Endothelial cell of umbilical vein (primary cell): ENCODE measurements at regions of chr1 and their contacts with region 1.

Region 1: DNA sequence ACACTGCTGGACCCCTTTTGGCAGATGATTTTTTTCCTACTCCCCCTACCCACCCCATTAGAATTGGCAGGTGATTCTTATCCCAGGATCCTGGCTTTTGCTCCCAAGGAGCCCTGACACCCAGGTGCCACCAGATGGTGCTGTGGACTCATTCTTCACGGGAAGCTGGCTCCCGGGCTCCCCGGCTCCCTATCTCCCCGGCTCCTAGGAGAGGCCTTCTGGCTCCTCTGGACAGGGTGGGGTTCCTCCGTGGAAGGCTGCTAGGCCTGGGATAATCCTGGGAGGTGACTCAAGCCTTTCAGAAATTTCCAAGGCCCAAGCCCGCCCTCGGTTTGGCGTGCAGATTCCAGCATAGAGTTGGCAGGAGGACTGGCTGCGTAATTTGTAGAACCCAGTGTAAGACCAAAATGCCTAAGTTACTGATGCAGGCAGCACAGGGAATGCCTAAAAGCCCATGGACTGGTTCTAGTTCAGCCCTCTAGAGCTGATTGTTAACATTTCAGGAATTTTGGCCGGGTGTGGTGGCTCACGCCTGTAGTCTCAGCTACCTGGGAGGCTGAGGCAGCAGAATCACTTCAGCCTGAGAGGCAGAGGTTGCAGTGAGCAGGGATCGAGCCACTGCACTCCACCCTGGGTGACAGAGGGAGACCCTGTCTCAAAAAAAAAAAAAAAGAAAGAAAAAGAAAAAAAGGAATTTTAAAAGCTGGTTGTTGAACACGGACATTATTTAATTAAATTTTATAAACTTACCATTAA is 6.8 kb upstream of the BSDC1 start:
- DNase-seq: peak; percentile 65
- H3K4me3 ChIP-seq: no peak overlapping the region
- H3K27ac ChIP-seq: no peak overlapping the region
- H3K4me1 ChIP-seq: no peaks in the 10 kb centered on the region
- H3K27me3 ChIP-seq: no peaks in the 10 kb centered on the region
- CTCF ChIP-seq: peak; percentile 88 to 90
- POLR2A ChIP-seq: no peak

Region 2: DNA sequence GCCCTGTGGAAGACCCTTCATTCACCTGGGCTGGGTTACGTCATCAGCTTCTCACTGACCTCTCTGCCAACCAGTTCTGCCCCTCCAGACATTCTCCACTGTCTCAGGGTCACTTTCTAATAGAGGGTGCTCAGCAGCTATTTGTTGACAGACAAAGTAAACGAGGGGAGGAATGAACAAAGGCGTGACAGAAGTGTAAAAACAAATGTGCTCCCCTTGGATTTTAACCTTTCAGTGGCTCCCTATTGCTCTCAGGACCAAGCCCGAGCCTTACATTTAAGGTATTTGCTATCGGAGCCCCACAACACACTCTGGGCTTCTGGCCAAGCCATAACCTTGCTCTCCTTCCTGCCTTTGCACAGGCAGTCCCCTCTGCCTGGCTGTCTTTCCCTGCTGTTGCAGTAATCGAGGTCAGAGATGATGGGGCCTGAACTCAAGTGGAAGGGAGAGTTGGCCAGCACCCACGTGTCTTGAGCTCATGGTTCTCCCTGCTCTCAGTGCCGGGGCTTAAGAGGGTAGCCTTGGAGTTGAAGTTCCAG is 55.7 kb before region 1 on chr1:
- CTCF ChIA-PET with region 1: interaction called, 10 read pairs
- POLR2A ChIA-PET with region 1: no interaction called
- dilution Hi-C with region 1: no loop called
- intact Hi-C with region 1: no loop called
- DNase-seq: peak; percentile 56
- H3K4me3 ChIP-seq: no peak overlapping the region
- H3K27ac ChIP-seq: no peak overlapping the region
- H3K4me1 ChIP-seq: peaks cover 22% of the 10 kb centered on the region
- H3K27me3 ChIP-seq: no peaks in the 10 kb centered on the region
- CTCF ChIP-seq: no peak
- POLR2A ChIP-seq: no peak

Region 3: DNA sequence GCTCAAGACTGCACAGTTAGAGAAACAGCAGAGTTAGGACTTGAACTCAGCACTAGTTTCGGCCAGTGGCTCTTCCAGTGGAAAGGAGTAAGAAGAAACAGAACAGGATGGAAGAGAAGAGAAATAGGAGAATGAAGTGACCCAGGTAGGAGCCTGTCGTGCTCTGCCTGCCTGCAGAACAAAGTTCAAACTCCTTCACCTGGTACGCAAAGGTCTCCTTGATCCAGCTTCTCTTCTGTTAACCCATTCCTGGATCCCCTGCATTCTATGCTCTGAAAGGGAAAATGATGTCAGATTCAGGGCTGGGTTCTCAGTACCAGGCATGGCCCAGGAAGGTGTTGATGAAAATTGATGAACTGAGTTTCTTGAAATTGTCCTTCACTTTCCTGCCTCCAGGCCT is 42.6 kb before region 1 on chr1:
- CTCF ChIA-PET with region 1: no interaction called
- POLR2A ChIA-PET with region 1: no interaction called
- dilution Hi-C with region 1: no loop called
- intact Hi-C with region 1: no loop called
- DNase-seq: no peak
- H3K4me3 ChIP-seq: no peak overlapping the region
- H3K27ac ChIP-seq: no peak overlapping the region
- H3K4me1 ChIP-seq: peaks cover 9% of the 10 kb centered on the region
- H3K27me3 ChIP-seq: no peaks in the 10 kb centered on the region
- CTCF ChIP-seq: no peak
- POLR2A ChIP-seq: no peak

Region 4: DNA sequence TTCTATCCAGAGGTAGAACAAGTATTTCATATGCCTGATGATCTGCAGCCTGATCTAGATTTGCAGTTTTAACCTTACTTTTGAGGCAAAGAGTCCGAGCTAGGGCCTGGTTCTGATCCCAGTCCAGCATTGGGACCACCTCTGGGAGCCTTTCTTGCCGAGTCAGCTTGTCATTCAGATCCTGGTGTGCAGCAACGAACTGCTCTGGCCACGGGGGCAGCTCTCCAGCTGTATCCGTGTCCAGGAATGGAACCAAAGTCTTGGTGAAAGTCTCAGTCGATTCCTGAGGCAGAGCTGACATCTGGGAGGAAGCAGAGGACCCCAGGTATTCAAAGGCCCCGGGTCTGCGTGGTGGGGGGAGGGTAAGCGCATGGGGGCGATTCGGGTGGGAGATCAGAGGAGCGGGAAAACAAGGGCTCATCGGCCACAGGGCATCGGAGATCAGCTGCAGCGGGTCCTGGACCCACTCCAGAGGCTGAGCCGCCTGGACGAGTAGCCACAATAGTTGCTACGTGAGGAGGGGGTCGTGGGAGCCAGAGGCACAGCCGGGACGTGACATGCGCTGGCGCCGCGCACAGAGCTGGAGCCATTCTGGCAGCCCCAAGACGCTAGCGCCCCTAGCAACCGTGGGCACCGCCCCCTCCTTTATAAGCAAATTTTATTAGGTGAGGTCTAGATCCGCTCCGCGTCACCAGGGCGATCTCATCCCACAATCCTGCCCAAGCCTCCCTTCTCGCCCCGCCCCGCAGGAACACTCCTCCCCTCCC is 25.6 kb after region 1 on chr1:
- CTCF ChIA-PET with region 1: interaction called, 14 read pairs
- POLR2A ChIA-PET with region 1: no interaction called
- dilution Hi-C with region 1: no loop called
- intact Hi-C with region 1: no loop called
- DNase-seq: no peak
- H3K4me3 ChIP-seq: no peak overlapping the region
- H3K27ac ChIP-seq: no peak overlapping the region
- H3K4me1 ChIP-seq: no peaks in the 10 kb centered on the region
- H3K27me3 ChIP-seq: peaks cover 48 to 50% of the 10 kb centered on the region in 2 experiments
- CTCF ChIP-seq: no peak
- POLR2A ChIP-seq: no peak

Region 5: GRCh38 chr1:32619701-32620485 is 218.8 kb after region 1 on chr1:
- CTCF ChIA-PET with region 1: interaction called, 16 read pairs
- POLR2A ChIA-PET with region 1: no interaction called
- dilution Hi-C with region 1: no loop called
- intact Hi-C with region 1: no loop called
- DNase-seq: peak; percentile 45
- H3K4me3 ChIP-seq: no peak overlapping the region
- H3K27ac ChIP-seq: no peak overlapping the region
- H3K4me1 ChIP-seq: no peaks in the 10 kb centered on the region
- H3K27me3 ChIP-seq: no peaks in the 10 kb centered on the region
- CTCF ChIP-seq: no peak
- POLR2A ChIP-seq: no peak

Region 6: GRCh38 chr1:32870615-32871363 is 469.7 kb after region 1 on chr1 and contains the start of gene FNDC5:
- CTCF ChIA-PET with region 1: interaction called, 24 read pairs
- POLR2A ChIA-PET with region 1: no interaction called
- dilution Hi-C with region 1: no loop called
- intact Hi-C with region 1: loop called (anchors 2 kb)
- DNase-seq: no peak
- H3K4me3 ChIP-seq: peak within 1 kb of the TSS in 1 of 3 experiments; percentile 36
- H3K27ac ChIP-seq: no peak within 1 kb of the TSS
- H3K4me1 ChIP-seq: no peaks in the 10 kb centered on the region
- H3K27me3 ChIP-seq: peaks cover 14 to 17% of the 10 kb centered on the region in 2 experiments
- CTCF ChIP-seq: no peak
- POLR2A ChIP-seq: no peak
- total RNA-seq, gene FNDC5: 0.64 TPM in 1 of 2 replicates, not detected in the other